ENCODE measurements at regions of chr4 and their contacts with region 1.

Region 1: GRCh38 chr4:110808351-110808878 is 185.5 kb upstream of the PITX2 start:
- DNase-seq: peak; percentile 36
- H3K4me3 Mint-ChIP-seq: peak overlapping the region; percentile 28
- H3K27ac Mint-ChIP-seq: peak overlapping the region; percentile 27
- H3K4me1 Mint-ChIP-seq: no peaks in the 10 kb centered on the region
- H3K27me3 Mint-ChIP-seq: no peaks in the 10 kb centered on the region
- CTCF ChIP-seq: no peak

Region 2: DNA sequence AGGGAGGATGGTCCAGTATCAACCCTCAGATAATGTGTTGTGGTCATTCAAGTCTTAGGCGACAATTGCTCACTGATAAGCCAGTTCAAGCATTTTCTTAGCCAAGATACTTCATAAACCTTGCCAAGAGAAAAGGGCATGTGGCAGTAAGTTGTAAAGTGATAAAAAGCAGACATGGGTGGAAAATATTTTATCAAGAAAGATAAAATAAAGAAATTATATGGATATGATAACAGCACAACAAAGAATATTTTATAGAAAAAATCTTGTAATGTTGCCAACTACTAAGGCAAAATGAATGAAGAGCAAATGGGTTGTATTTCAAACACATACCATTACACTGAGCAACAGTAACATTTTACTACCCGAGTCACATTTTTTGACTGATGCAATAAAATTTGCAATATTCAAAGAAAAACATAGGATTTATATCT is 31.8 kb after region 1 on chr4:
- CTCF ChIA-PET with region 1: no interaction called
- intact Hi-C with region 1: no loop called
- DNase-seq: no peak
- H3K4me3 Mint-ChIP-seq: no peak overlapping the region
- H3K27ac Mint-ChIP-seq: no peak overlapping the region
- H3K4me1 Mint-ChIP-seq: no peaks in the 10 kb centered on the region
- H3K27me3 Mint-ChIP-seq: no peaks in the 10 kb centered on the region
- CTCF ChIP-seq: no peak

Region 3: DNA sequence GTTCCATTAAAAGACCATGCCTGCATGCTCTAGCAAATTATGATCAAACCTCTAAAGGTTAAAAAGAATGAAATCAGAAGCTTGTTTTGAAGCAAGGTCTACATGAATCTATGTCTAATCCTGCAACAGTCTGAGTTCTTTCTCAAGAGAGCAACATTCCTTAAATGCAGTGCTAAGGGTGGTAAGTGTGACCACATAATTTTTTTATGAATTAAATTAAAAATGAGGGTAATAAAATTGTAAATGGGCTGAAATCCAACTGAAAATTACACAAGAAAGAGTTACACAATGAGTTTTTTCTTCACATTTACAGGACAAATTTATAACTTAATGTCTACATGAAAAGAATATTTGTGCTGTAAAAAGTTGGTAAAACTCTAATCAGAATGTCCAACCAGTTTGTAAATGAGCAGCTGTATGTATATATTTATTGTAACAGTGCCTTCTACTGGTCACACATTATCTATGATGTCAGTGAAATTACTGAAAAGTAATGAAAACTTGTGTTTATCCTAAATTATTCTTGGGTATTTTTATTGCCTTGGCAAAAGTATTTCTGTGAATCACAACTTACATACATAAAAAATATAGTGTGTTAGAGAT is 150.7 kb after region 1 on chr4:
- CTCF ChIA-PET with region 1: no interaction called
- intact Hi-C with region 1: loop called (anchors 10 kb)
- DNase-seq: no peak
- H3K4me3 Mint-ChIP-seq: no peak overlapping the region
- H3K27ac Mint-ChIP-seq: no peak overlapping the region
- H3K4me1 Mint-ChIP-seq: no peaks in the 10 kb centered on the region
- H3K27me3 Mint-ChIP-seq: no peaks in the 10 kb centered on the region
- CTCF ChIP-seq: no peak

Measured in Calu3 (cell line).